Breast epithelium (tissue), 4 donors: ENCODE measurements at regions of chr3 and their contacts with region 1.

Region 1: GRCh38 chr3:129794311-129795185 is 99.0 kb downstream of the TMCC1 start:
- DNase-seq: peak in 1 of 2 donors; percentile 65
- H3K4me3 ChIP-seq: peak overlapping the region in 2 of 3 donors; percentile 30 to 54
- H3K27ac ChIP-seq: peak overlapping the region; percentile 66 to 83
- H3K4me1 ChIP-seq: peaks cover 0 to 13% of the 10 kb centered on the region in 2 donors
- H3K27me3 ChIP-seq: no peaks in the 10 kb centered on the region
- CTCF ChIP-seq: no peak
- POLR2A ChIP-seq: no peak

Region 2: DNA sequence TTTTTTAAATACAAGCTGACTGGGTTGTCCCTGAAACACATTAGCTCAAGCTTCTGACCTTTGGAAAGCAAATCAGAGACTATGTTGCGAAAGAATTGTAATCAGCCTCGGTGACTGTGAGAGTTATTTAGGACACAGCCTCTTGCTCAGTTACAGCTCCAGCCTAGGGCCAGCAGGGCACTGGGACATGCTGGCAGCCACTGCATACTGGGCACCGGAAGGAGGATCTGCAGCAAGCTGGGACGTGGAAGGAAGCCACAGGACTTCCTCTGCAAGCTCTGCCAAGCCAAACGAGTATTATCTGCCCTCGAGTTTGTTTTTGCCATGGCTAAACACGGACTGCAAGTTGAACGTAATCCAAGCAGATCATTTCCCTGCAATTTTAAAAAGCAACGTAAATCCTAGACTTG is 569.6 kb before region 1 on chr3:
- intact Hi-C with region 1: no loop called
- DNase-seq: peak; percentile 76 to 82
- H3K4me3 ChIP-seq: peak overlapping the region; percentile 5 to 54 (median 24)
- H3K27ac ChIP-seq: peak overlapping the region; percentile 76 to 83
- H3K4me1 ChIP-seq: peaks cover 0 to 3% of the 10 kb centered on the region in 2 donors
- H3K27me3 ChIP-seq: no peaks in the 10 kb centered on the region
- CTCF ChIP-seq: no peak
- POLR2A ChIP-seq: no peak

Region 3: GRCh38 chr3:129878372-129878771 is 83.8 kb after region 1 on chr3:
- intact Hi-C with region 1: loop called (anchors 5 kb)
- DNase-seq: no peak
- H3K4me3 ChIP-seq: no peak overlapping the region
- H3K27ac ChIP-seq: no peak overlapping the region
- H3K4me1 ChIP-seq: no peaks in the 10 kb centered on the region
- H3K27me3 ChIP-seq: no peaks in the 10 kb centered on the region
- CTCF ChIP-seq: no peak
- POLR2A ChIP-seq: no peak